Mammary epithelial cell (primary cell): ENCODE measurements at regions of chr11 and their contacts with region 1.

Region 1: GRCh38 chr11:11701070-11701469 is 79.3 kb upstream of the GALNT18 start:
- DNase-seq: peak; percentile 72
- H3K4me3 ChIP-seq: no peak overlapping the region
- H3K27ac ChIP-seq: no peak overlapping the region
- H3K4me1 ChIP-seq: peaks cover 8% of the 10 kb centered on the region
- H3K27me3 ChIP-seq: peaks cover 2% of the 10 kb centered on the region
- CTCF ChIP-seq: peak; percentile 46 to 64

Region 2: DNA sequence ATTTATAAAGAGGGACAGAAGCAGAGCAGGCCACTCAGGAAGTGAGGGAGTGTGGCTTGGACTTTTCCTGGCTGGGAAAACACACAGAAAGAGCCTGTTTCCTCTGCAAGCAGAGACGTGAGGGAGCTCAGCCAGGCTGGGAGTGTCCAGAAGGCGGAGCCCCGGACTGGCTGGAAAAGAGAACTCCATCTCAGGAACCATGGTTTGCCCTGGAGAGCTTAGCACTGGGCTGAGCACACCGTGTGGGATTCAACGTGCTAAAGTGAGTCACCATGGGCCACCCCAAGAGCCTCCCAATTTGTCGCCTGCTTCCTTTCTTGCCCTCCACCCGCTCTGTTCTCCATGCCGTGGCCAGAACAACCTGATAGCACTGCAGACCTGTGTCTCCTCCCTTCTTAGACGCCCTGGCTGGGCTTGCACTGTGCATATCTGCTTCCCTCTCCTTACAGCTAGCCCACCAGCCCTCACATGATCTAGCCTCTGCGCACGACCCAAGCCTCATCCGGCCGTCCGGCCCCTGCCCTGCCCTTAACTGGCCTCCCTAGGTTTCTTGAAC is 131.1 kb before region 1 on chr11:
- CTCF ChIA-PET with region 1: no interaction called
- dilution Hi-C with region 1: no loop called
- in situ Hi-C with region 1: no loop called
- intact Hi-C with region 1: no loop called
- DNase-seq: peak; percentile 62
- H3K4me3 ChIP-seq: no peak overlapping the region
- H3K27ac ChIP-seq: peak overlapping the region; percentile 85
- H3K4me1 ChIP-seq: peaks cover 38% of the 10 kb centered on the region
- H3K27me3 ChIP-seq: no peaks in the 10 kb centered on the region
- CTCF ChIP-seq: no peak

Region 3: GRCh38 chr11:11916981-11917399 is 215.9 kb after region 1 on chr11:
- CTCF ChIA-PET with region 1: no interaction called
- dilution Hi-C with region 1: no loop called
- in situ Hi-C with region 1: no loop called
- intact Hi-C with region 1: loop called (anchors 10 kb)
- DNase-seq: peak; percentile 67
- H3K4me3 ChIP-seq: no peak overlapping the region
- H3K27ac ChIP-seq: no peak overlapping the region
- H3K4me1 ChIP-seq: no peaks in the 10 kb centered on the region
- H3K27me3 ChIP-seq: no peaks in the 10 kb centered on the region
- CTCF ChIP-seq: no peak